CD4-positive, alpha-beta memory T cell (primary cell): ENCODE measurements at regions of chr14 and their contacts with region 1.

Region 1: DNA sequence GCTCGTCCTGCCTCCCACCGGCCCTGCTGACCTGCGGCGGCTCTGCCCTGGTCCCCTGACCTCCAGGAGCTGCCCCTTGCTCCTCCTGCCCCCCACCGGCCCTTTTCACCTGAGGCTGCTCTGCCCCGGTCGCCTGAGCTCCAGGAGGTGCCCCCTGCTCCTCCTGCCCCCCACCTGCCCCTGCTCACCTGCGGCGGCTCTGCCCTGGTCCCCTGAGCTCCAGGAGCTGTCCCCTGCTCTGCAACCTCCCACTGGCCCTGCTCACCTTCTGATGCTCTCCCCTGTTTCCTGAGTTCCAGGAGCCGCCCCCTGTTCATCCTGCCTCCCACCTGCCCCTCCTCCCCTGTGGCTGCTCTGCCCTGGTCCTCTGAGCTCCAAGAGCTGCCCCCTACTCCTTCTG is 101.3 kb downstream of the TMEM121 start:
- DNase-seq: no peak
- H3K4me3 ChIP-seq: no peak overlapping the region
- H3K4me3 Mint-ChIP-seq: peak overlapping the region in 1 of 8 donors; percentile 26
- H3K27ac ChIP-seq: no peak overlapping the region
- H3K27ac Mint-ChIP-seq: no peak overlapping the region
- H3K4me1 ChIP-seq: no peaks in the 10 kb centered on the region
- H3K4me1 Mint-ChIP-seq: peaks cover 0 to 2% (median 0%) of the 10 kb centered on the region in 4 donors
- H3K27me3 ChIP-seq: no peaks in the 10 kb centered on the region
- H3K27me3 Mint-ChIP-seq: peaks cover 9 to 12% of the 10 kb centered on the region in 2 donors

Region 2: DNA sequence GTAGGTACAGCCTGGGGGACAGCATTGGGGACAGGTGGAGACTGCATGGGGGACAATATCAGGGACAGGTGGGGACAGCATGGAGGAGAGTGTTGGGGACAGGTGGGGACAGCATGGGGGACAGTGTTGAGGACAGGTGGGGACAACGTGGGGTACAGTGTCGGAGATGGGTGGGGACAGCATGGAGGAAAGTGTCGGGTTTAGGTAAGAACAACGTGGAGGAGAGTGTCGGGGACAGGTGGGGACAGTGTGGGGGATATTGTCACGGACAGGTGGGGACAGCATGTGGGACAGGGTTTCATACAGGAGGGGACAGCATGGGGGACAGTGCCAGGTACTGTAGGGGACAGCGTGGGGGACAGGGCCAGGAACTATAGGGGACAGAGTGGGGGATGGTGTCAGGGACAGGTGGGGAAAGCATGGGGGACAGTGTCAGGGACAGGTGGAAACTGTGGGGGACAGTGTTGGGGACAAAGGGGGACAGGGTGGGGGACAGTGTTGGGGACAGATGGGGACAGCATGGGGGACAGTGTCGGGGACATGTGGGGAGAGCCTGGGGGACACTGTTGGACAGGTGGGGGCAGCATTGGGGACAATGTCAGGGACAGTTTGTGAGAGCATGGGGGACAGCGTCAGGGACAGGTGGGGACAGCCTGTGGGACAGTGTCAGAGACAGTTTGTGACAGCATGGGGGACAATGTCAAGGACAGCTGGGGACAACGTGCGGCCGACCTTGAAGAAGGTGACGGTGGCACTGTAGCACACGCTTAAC is 111.8 kb after region 1 on chr14:
- CTCF ChIA-PET with region 1: no interaction called
- POLR2A ChIA-PET with region 1: no interaction called
- intact Hi-C with region 1: loop called (anchors 5 kb)
- DNase-seq: no peak
- H3K4me3 ChIP-seq: no peak overlapping the region
- H3K4me3 Mint-ChIP-seq: no peak overlapping the region
- H3K27ac ChIP-seq: no peak overlapping the region
- H3K27ac Mint-ChIP-seq: no peak overlapping the region
- H3K4me1 ChIP-seq: no peaks in the 10 kb centered on the region
- H3K4me1 Mint-ChIP-seq: no peaks in the 10 kb centered on the region
- H3K27me3 ChIP-seq: no peaks in the 10 kb centered on the region
- H3K27me3 Mint-ChIP-seq: no peaks in the 10 kb centered on the region